ENCODE measurements at regions of chr11 and their contacts with region 1.

Region 1: DNA sequence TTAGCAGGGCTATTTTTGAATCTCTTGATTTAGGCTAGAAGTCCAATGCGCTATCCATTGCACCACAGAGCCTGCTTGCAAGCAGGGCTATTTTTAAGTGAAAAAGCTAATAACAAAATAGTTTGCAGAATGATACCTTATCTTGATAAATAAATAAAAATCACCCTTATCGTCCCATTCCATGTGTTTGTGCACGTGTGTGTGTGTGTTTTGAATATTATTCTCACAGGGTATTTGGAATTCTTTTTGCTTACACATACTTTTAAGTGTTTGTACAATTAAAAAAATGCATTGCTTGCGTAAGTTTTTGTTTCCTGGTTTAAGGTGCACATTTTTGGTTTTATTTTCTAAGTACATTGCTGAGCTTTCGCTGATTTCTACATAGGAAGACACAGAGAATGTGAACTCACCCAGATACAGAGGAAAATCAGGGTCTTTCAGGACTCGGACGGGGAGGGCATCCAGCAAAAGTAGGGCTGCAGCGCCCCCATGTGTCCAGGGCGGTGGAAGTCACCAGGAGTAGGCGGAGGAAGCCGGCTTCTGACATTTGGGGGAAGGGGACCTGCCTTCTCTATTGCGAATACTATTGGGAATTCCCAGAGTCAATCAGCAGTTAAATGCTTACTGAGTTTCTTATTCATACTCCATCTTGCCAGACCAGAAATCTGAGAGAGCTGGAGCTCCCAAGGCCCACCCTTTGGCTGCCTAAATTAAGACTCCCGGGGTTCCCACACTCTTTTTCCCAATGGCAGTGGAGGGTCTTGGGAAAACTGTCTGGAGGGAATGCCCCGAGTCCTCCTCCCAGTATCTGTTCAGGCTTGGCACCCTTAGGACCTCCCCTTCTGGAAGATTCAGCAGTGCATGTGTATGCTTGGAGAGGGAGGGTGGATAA is 27.2 kb downstream of the SLC1A2 start:
- DNase-seq: peak; percentile 75 to 94 (median 82)
- ATAC-seq: peak; percentile 75
- H3K4me3 ChIP-seq: no peak overlapping the region
- H3K4me3 Mint-ChIP-seq: peak overlapping the region; percentile 35
- H3K27ac ChIP-seq: no peak overlapping the region
- H3K27ac Mint-ChIP-seq: no peak overlapping the region
- H3K4me1 ChIP-seq: peaks cover 5% of the 10 kb centered on the region
- H3K4me1 Mint-ChIP-seq: peaks cover 17% of the 10 kb centered on the region
- H3K27me3 ChIP-seq: peaks cover 0 to 3% of the 10 kb centered on the region in 2 experiments
- H3K27me3 Mint-ChIP-seq: no peaks in the 10 kb centered on the region
- CTCF ChIP-seq: peak; percentile 94

Region 2: GRCh38 chr11:34926101-34926830 is 465.9 kb before region 1 on chr11:
- CTCF ChIA-PET with region 1: interaction called, 187 read pairs
- POLR2A ChIA-PET with region 1: no interaction called
- intact Hi-C with region 1: loop called (anchors 1 kb)
- DNase-seq: peak in 3 of 9 experiments; percentile 12 to 73 (median 63)
- ATAC-seq: peak; percentile 71
- H3K4me3 ChIP-seq: no peak overlapping the region
- H3K4me3 Mint-ChIP-seq: no peak overlapping the region
- H3K27ac ChIP-seq: no peak overlapping the region
- H3K27ac Mint-ChIP-seq: no peak overlapping the region
- H3K4me1 ChIP-seq: peaks cover 3% of the 10 kb centered on the region
- H3K4me1 Mint-ChIP-seq: peaks cover 29% of the 10 kb centered on the region
- H3K27me3 ChIP-seq: no peaks in the 10 kb centered on the region
- H3K27me3 Mint-ChIP-seq: no peaks in the 10 kb centered on the region
- CTCF ChIP-seq: peak; percentile 96

Region 3: GRCh38 chr11:35138943-35139721 is 253.0 kb before region 1 on chr11 and contains the start of gene CD44:
- CTCF ChIA-PET with region 1: interaction called, 11 read pairs
- POLR2A ChIA-PET with region 1: no interaction called
- intact Hi-C with region 1: loop called in 1 of 2 experiments (anchors 5 kb)
- DNase-seq: peak; percentile 67 to 93 (median 85)
- ATAC-seq: peak; percentile 83
- H3K4me3 ChIP-seq: peak within 1 kb of the TSS; percentile 80 to 97
- H3K4me3 Mint-ChIP-seq: peak within 1 kb of the TSS; percentile 90
- H3K27ac ChIP-seq: peak within 1 kb of the TSS; percentile 82 to 98
- H3K27ac Mint-ChIP-seq: peak within 1 kb of the TSS; percentile 98
- H3K4me1 ChIP-seq: peaks cover 35% of the 10 kb centered on the region
- H3K4me1 Mint-ChIP-seq: peaks cover 47% of the 10 kb centered on the region
- H3K27me3 ChIP-seq: no peaks in the 10 kb centered on the region
- H3K27me3 Mint-ChIP-seq: no peaks in the 10 kb centered on the region
- CTCF ChIP-seq: no peak
- total RNA-seq, gene CD44: 1,070 to 1,104 TPM

Region 4: GRCh38 chr11:35192347-35192746 is 199.8 kb before region 1 on chr11:
- CTCF ChIA-PET with region 1: interaction called, 4 read pairs
- POLR2A ChIA-PET with region 1: no interaction called
- intact Hi-C with region 1: loop called in 1 of 2 experiments (anchors 10 kb)
- DNase-seq: no peak
- ATAC-seq: no peak
- H3K4me3 ChIP-seq: no peak overlapping the region
- H3K4me3 Mint-ChIP-seq: no peak overlapping the region
- H3K27ac ChIP-seq: no peak overlapping the region
- H3K27ac Mint-ChIP-seq: peak overlapping the region; percentile 56
- H3K4me1 ChIP-seq: peaks cover 55% of the 10 kb centered on the region
- H3K4me1 Mint-ChIP-seq: peaks cover 95% of the 10 kb centered on the region
- H3K27me3 ChIP-seq: no peaks in the 10 kb centered on the region
- H3K27me3 Mint-ChIP-seq: no peaks in the 10 kb centered on the region
- CTCF ChIP-seq: no peak

Region 5: DNA sequence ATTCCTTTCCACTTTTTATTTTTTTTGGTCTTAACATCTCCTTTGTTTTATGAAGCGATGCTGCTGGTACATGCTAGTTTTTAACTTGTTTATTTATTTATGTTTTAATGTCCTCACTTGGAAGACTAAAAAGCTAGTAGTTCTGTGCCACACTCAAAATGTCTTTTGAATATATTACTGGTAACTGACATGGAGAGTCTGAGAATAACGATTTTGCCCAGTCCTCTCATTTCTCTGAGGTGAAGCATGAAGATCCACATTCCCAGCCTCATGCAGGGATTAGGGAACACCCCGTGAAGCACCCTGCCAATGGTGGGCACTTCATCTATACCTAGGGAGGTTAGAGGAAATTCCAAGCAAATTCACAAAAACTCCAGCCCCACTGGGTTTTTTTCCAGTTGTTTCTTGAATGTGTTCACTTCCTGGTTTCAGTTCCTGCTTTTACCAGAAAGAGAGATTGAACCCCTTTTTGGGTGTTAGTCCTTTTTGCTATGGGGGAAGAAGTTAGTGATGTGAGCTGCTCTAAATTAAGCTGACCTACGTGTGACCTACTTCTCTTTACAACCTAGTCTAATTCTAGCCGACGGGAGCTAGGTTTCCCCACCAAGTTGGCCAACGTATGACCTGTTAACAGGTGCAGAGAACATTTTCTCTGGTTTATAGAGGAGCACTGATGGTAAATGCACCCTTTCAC is 79.0 kb before region 1 on chr11:
- CTCF ChIA-PET with region 1: interaction called, 15 read pairs
- POLR2A ChIA-PET with region 1: no interaction called
- intact Hi-C with region 1: no loop called
- DNase-seq: peak in 1 of 9 experiments; percentile 20
- ATAC-seq: no peak
- H3K4me3 ChIP-seq: no peak overlapping the region
- H3K4me3 Mint-ChIP-seq: no peak overlapping the region
- H3K27ac ChIP-seq: no peak overlapping the region
- H3K27ac Mint-ChIP-seq: no peak overlapping the region
- H3K4me1 ChIP-seq: no peaks in the 10 kb centered on the region
- H3K4me1 Mint-ChIP-seq: peaks cover 8% of the 10 kb centered on the region
- H3K27me3 ChIP-seq: no peaks in the 10 kb centered on the region
- H3K27me3 Mint-ChIP-seq: no peaks in the 10 kb centered on the region
- CTCF ChIP-seq: no peak

Region 6: DNA sequence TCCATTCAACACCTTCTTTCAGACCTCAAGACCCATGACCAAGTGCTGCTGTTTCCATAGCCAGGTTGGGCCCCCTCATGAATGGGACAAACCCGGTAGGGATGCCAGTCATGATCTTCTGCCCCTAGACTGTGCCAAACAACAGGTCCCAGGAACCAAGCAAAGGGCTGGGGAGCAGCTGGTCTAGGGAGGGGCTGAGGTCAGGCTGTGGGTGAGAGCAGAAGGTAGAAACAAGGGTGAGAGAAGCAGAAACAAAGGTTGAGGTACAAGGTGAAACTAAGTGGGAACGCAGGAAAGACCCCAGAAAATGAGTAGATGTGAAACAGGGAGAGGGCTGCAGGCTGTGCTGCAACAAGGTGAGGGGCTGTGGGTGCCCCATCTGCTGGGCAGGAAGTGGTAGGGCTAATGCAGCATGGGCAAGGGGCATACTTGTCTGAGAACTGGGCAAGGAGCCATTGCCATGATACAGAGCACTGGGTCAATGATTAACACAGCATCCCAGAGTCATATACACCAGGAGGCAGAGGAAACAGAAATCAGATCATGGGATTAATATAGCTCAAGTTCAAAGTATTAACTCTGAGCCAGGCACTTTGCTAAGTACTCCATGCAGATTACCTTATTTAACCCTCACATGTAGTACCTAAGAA is 18.8 kb before region 1 on chr11:
- CTCF ChIA-PET with region 1: interaction called, 15 read pairs
- POLR2A ChIA-PET with region 1: no interaction called
- intact Hi-C with region 1: no loop called
- DNase-seq: peak in 1 of 9 experiments; percentile 25
- ATAC-seq: no peak
- H3K4me3 ChIP-seq: no peak overlapping the region
- H3K4me3 Mint-ChIP-seq: no peak overlapping the region
- H3K27ac ChIP-seq: no peak overlapping the region
- H3K27ac Mint-ChIP-seq: no peak overlapping the region
- H3K4me1 ChIP-seq: no peaks in the 10 kb centered on the region
- H3K4me1 Mint-ChIP-seq: peaks cover 5% of the 10 kb centered on the region
- H3K27me3 ChIP-seq: no peaks in the 10 kb centered on the region
- H3K27me3 Mint-ChIP-seq: no peaks in the 10 kb centered on the region
- CTCF ChIP-seq: no peak

Region 7: DNA sequence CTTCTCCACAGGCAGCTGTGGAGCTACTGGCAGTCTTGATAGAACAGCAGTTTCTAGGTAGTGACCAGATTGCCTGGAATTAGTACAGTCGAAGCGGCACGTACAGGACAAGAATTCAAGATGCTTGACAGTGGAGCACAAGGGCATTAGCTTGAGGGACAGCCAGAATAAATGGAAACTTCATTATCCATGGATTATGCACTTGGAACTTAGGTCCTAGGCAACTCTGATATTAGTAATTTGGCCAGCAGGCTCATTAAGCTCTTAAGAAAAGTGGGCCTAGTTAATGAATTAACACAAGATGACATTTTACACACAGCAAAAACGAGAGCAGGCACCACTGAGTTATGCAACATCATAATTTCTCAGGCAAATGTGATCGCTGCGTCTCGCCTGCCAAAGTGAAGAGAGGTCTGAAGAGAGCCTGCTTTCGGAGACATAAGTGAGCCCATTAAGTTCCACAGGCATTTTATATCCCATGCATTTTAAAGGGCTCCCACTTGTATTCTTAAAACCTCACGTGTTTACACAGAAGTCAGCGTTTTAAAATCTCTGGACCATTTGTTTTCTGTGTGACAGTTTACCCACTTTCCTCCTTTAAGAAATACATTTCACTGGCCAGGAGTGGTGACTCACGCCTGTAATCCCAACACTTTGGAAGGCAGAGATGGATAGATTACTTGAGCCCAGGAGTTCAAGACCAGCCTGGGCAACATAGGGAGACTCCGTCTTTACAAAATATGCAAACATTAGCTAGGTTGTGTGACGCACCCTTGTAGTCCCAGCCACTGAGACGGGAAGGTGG is 830.9 kb after region 1 on chr11:
- CTCF ChIA-PET with region 1: no interaction called
- POLR2A ChIA-PET with region 1: no interaction called
- intact Hi-C with region 1: no loop called
- DNase-seq: no peak
- ATAC-seq: no peak
- H3K4me3 ChIP-seq: no peak overlapping the region
- H3K4me3 Mint-ChIP-seq: no peak overlapping the region
- H3K27ac ChIP-seq: no peak overlapping the region
- H3K27ac Mint-ChIP-seq: no peak overlapping the region
- H3K4me1 ChIP-seq: no peaks in the 10 kb centered on the region
- H3K4me1 Mint-ChIP-seq: no peaks in the 10 kb centered on the region
- H3K27me3 ChIP-seq: no peaks in the 10 kb centered on the region
- H3K27me3 Mint-ChIP-seq: peaks cover 3% of the 10 kb centered on the region
- CTCF ChIP-seq: no peak